Ovary (tissue), 10 donors: ENCODE measurements at regions of chr11 and their contacts with region 1.

Region 1: DNA sequence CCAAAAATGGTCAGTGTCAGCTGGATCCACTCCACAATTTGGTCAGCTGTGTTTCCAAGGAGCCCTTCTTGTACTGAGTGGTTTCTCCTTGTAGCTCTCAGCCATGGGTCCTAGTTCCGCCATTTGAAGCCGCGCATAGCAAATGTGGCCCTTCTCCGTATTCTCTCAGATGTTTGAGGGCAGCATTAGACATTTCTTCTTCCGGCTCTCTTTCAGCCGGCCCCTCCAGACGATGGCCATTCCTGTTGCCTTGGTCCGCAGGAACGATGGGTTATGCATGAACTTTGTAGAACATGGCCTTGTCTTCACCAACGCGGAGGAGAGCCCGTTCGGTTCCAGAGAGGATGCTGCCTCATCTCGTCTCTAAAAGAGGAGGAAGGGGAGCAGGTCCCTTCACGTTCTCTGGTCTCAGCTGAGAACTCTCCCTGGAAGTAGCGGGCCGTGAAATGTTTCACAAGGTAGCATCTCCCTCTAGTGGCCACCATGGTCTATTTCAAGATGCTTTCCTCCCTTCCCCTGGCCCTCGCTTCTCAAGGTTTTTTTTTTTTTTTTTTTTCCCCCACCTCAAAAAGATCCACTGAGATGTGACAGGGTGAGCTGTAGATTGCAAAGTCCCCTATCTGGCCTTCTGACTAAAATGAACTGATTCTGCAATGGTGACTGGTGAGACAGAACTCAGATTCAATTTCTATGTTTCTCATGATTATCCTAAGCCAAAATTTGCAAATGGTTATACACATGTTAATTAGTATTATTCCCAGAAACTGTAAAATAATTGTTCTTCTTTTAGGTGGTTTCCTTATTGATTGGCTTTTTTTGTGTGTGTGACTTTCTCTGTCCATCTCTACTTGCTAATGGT is 19.8 kb upstream of the PLET1 start:
- DNase-seq: peak; percentile 54 to 76 (median 57)
- H3K4me3 ChIP-seq: peak overlapping the region; percentile 40
- H3K27ac ChIP-seq: no peak overlapping the region
- H3K4me1 ChIP-seq: no peaks in the 10 kb centered on the region
- H3K27me3 ChIP-seq: no peaks in the 10 kb centered on the region
- CTCF ChIP-seq: peak; percentile 58 to 75 (median 64)
- EP300 ChIP-seq: no peak
- POLR2A ChIP-seq: no peak

Region 2: DNA sequence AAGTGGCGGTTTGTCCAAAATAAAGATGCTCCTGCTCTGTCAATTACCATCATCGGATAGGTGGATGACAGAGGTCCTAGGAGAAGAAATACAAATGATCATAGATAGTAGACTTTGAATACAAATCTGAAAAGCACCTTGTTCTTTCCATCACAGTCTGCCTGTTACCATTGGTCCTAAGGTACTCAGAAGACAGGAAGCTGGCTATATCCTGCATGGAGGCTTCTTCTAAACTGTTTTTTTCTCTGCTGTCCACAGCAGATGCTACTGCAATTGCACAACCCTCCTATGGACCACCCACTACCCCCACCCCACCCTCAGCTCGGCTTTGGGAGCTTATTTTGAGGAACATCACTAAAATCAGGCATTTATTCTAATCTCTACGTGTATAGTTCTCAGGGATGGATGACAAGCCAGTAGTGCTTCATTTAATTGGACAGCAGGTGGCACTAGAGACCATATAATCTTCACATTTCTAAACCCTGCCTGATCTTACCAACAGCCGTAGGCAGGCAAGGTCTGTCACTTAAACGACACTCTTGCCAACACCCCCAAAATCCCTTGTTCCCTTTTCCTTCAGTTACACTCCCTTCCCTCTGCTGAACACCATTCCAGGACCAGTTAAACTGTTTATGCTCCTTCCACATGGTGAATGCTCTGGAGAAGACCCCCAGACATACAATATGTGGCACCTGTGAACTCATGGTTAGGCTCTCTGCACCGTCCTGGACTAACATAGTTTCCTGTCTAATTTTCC is 60.8 kb before region 1 on chr11:
- intact Hi-C with region 1: loop called (anchors 2 to 5 kb)
- DNase-seq: peak in 4 of 5 donors; percentile 12 to 43 (median 24)
- H3K4me3 ChIP-seq: no peak overlapping the region
- H3K27ac ChIP-seq: no peak overlapping the region
- H3K4me1 ChIP-seq: no peaks in the 10 kb centered on the region
- H3K27me3 ChIP-seq: no peaks in the 10 kb centered on the region
- CTCF ChIP-seq: peak; percentile 59 to 79 (median 78)
- EP300 ChIP-seq: no peak
- POLR2A ChIP-seq: no peak

Region 3: GRCh38 chr11:112410325-112410724 is 129.8 kb after region 1 on chr11:
- intact Hi-C with region 1: no loop called
- DNase-seq: no peak
- H3K4me3 ChIP-seq: no peak overlapping the region
- H3K27ac ChIP-seq: no peak overlapping the region
- H3K4me1 ChIP-seq: no peaks in the 10 kb centered on the region
- H3K27me3 ChIP-seq: no peaks in the 10 kb centered on the region
- CTCF ChIP-seq: no peak
- EP300 ChIP-seq: no peak
- POLR2A ChIP-seq: no peak

Region 4: DNA sequence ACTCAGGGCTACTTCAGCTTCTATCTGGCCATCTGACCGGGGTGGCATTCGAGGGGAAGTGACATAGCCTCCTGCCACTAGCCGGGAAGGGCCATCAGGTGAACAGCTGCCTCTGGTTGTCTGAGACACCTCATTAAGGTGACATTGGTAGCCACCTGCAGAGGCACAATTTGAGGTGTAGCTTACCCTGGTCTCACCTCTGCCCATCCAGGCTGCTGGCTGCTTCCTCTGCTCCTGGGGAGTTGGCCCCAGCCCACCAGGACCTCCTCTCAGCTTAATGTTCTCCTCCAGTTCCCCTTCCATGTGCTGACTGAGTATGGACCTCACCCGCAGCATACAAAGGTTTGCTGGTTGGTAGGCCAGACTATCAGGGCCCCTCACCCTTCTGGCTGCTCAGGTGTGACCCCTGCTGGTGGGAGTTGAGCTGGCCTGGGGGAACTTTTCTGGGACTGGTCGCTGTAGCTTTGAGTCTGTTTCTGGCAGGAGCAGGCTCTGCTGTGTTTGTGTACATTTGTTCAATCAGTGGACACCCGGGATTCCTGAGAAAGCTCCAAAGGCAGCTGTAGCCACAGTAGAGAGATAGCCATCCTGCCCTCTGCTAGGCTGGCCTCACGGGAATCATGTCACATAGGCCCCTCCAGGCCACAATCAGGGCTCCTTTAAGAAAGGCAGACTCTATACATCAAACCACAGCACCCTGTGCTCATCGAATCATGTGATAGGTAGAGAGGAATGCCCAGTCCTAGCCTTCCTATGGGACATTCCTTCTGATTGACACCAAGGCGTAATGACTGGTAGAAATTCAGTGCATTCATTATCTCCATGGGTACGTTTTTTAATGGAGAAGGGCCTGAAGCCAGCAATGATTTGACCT is 275.2 kb after region 1 on chr11:
- intact Hi-C with region 1: loop called in 1 of 4 experiments (anchors 10 kb)
- DNase-seq: peak in 4 of 5 donors; percentile 24 to 53 (median 43)
- H3K4me3 ChIP-seq: no peak overlapping the region
- H3K27ac ChIP-seq: no peak overlapping the region
- H3K4me1 ChIP-seq: no peaks in the 10 kb centered on the region
- H3K27me3 ChIP-seq: no peaks in the 10 kb centered on the region
- CTCF ChIP-seq: no peak
- EP300 ChIP-seq: no peak
- POLR2A ChIP-seq: no peak